ENCODE measurements at regions of chr1 and their contacts with region 1.

Region 1: GRCh38 chr1:43974443-43975248 is at the start of gene ATP6V0B:
- DNase-seq: peak; percentile 69 to 97
- H3K4me3 ChIP-seq: peak within 1 kb of the TSS; percentile 79 to 88 (median 82)
- H3K27ac ChIP-seq: peak within 1 kb of the TSS; percentile 85
- H3K4me1 ChIP-seq: peaks cover 6 to 18% (median 12%) of the 10 kb centered on the region in 4 experiments
- H3K27me3 ChIP-seq: no peaks in the 10 kb centered on the region
- CTCF ChIP-seq: peak in 1 of 3 experiments; percentile 3; a peak in 2 of 4 replicates
- EP300 ChIP-seq: no peak
- POLR2A ChIP-seq: peak in 1 of 2 experiments; percentile 73; a peak in 2 of 3 replicates
- RAD21 ChIP-seq: no peak
- total RNA-seq, gene ATP6V0B: 105 and 106 TPM in 2 replicates

Region 2: GRCh38 chr1:43946236-43947060 is 28.2 kb before region 1 on chr1 and contains the start of gene IPO13:
- CTCF ChIA-PET with region 1: interaction called, 79 read pairs
- POLR2A ChIA-PET with region 1: interaction called, 29 read pairs
- DNase-seq: peak; percentile 93 to 97
- H3K4me3 ChIP-seq: peak within 1 kb of the TSS; percentile 44 to 90 (median 76)
- H3K27ac ChIP-seq: peak within 1 kb of the TSS; percentile 99
- H3K4me1 ChIP-seq: peaks cover 0 to 17% (median 4%) of the 10 kb centered on the region in 4 experiments; a peak in 5 of 7 replicates
- H3K27me3 ChIP-seq: no peaks in the 10 kb centered on the region; a peak in 1 of 7 replicates
- CTCF ChIP-seq: peak; percentile 75 to 85 (median 82)
- EP300 ChIP-seq: no peak
- POLR2A ChIP-seq: no peak
- RAD21 ChIP-seq: peak; percentile 71 to 77
- total RNA-seq, gene IPO13: 20.7 and 23.0 TPM in 2 replicates

Region 3: GRCh38 chr1:43952731-43953346 is 21.8 kb before region 1 on chr1:
- CTCF ChIA-PET with region 1: interaction called, 79 read pairs
- POLR2A ChIA-PET with region 1: interaction called, 29 read pairs
- DNase-seq: peak in 1 of 2 experiments; percentile 78
- H3K4me3 ChIP-seq: no peak overlapping the region
- H3K27ac ChIP-seq: no peak overlapping the region
- H3K4me1 ChIP-seq: peaks cover 0 to 7% (median 5%) of the 10 kb centered on the region in 4 experiments; a peak in 5 of 7 replicates
- H3K27me3 ChIP-seq: no peaks in the 10 kb centered on the region
- CTCF ChIP-seq: no peak
- EP300 ChIP-seq: no peak
- POLR2A ChIP-seq: no peak
- RAD21 ChIP-seq: no peak

Region 4: DNA sequence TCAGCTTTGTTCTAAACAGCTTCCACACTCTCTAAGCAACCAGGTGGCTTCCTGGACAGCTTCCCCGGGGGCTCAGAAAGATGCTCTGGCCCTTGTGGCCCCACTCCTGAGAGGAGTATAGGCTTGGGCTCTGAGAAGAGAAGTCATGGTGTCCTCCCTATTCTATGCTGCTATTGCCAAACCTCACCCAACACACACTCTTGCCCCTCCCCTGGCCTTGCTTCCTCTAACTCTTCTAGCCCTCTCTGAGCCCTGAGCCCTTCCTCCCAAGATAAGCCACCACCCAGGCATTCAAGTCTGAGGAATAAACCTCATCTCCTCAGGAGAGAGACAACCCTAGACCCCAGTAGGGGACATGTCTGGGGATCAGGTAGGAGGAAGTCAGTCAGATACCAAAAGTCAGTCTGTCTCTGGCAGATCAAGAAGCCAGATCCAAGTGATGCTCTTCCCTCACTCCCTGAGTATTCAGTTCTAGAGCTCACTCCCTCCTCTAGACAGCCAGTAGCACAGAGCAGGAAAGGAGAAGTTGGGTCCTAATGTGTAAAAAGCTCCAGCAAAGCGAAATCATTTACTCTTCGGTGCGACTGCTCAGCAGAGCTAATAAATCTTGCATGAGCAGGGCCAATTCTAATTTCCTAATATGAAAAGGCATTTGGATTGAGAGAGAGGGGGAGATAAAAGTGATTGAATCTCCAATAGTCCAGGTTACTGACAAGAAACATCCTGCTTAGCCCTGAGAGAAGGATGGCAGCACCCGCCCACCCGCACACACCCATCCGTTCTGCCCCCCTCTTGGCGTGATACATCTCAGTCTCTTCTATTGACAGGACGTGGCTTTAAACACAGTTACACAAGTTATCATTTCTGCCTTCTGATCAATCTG is 289.2 kb after region 1 on chr1:
- CTCF ChIA-PET with region 1: no interaction called
- POLR2A ChIA-PET with region 1: no interaction called
- DNase-seq: no peak
- H3K4me3 ChIP-seq: no peak overlapping the region
- H3K27ac ChIP-seq: no peak overlapping the region
- H3K4me1 ChIP-seq: peaks cover 1 to 13% (median 8%) of the 10 kb centered on the region in 4 experiments; a peak in 5 of 7 replicates
- H3K27me3 ChIP-seq: no peaks in the 10 kb centered on the region
- CTCF ChIP-seq: no peak
- EP300 ChIP-seq: no peak
- POLR2A ChIP-seq: no peak
- RAD21 ChIP-seq: no peak